ENCODE measurements at regions of chr4 and their contacts with region 1.

Region 1: GRCh38 chr4:134948110-134948642 is 746.6 kb upstream of the PABPC4L start:
- DNase-seq: no peak
- H3K4me3 ChIP-seq: no peak overlapping the region
- H3K27ac ChIP-seq: no peak overlapping the region
- H3K4me1 ChIP-seq: no peaks in the 10 kb centered on the region
- H3K27me3 ChIP-seq: no peaks in the 10 kb centered on the region
- CTCF ChIP-seq: no peak
- POLR2A ChIP-seq: no peak

Region 2: DNA sequence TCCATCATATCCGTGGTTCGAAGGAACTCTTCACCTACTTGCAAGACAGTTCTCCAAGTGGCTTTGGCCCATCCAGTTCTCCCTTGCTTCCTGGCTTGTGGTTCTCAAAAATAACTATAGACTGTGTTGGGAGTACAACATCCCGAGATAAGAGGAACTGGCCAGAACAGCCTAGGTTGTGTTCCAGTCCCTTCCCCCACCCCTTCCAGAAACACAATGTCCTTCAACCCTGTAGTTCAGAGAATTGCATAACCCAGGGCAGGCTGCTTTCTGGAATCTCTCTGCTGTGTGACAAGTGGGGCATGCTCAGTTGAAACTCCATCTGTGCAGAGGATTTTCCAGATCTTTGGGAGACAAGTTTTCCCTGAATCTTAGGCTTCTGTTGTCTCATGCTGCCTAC is 1592.5 kb before region 1 on chr4:
- intact Hi-C with region 1: no loop called
- DNase-seq: no peak
- H3K4me3 ChIP-seq: no peak overlapping the region
- H3K27ac ChIP-seq: no peak overlapping the region
- H3K4me1 ChIP-seq: no peaks in the 10 kb centered on the region
- H3K27me3 ChIP-seq: no peaks in the 10 kb centered on the region
- CTCF ChIP-seq: no peak
- POLR2A ChIP-seq: no peak

Region 3: GRCh38 chr4:134883831-134884449 is 64.2 kb before region 1 on chr4:
- intact Hi-C with region 1: no loop called
- DNase-seq: no peak
- H3K4me3 ChIP-seq: no peak overlapping the region
- H3K27ac ChIP-seq: no peak overlapping the region
- H3K4me1 ChIP-seq: no peaks in the 10 kb centered on the region
- H3K27me3 ChIP-seq: no peaks in the 10 kb centered on the region
- CTCF ChIP-seq: no peak
- POLR2A ChIP-seq: no peak

Region 4: DNA sequence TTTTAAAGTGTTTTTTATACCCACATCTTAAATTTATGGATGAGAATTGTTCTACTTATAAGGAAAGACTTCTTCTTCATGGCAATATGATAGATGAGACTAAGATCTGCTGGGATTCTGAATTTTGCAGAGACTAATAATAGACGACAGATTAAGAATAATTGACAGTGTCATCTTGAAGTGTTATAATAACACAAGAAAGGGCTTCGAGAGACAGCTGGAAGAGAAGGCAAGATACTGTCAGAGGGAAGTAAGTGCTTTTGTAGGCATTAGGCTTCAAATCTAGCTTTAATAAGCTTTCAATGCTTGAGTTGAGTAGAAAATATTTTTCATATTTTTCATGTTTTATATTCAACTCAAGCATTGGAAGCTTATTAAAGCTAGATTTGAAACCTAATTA is 51.0 kb after region 1 on chr4:
- intact Hi-C with region 1: loop called (anchors 2 kb)
- DNase-seq: no peak
- H3K4me3 ChIP-seq: no peak overlapping the region
- H3K27ac ChIP-seq: no peak overlapping the region
- H3K4me1 ChIP-seq: no peaks in the 10 kb centered on the region
- H3K27me3 ChIP-seq: no peaks in the 10 kb centered on the region
- CTCF ChIP-seq: no peak
- POLR2A ChIP-seq: no peak

Region 5: GRCh38 chr4:135116651-135117050 is 168.5 kb after region 1 on chr4:
- intact Hi-C with region 1: no loop called
- DNase-seq: no peak
- H3K4me3 ChIP-seq: no peak overlapping the region
- H3K27ac ChIP-seq: no peak overlapping the region
- H3K4me1 ChIP-seq: no peaks in the 10 kb centered on the region
- H3K27me3 ChIP-seq: no peaks in the 10 kb centered on the region
- CTCF ChIP-seq: no peak
- POLR2A ChIP-seq: no peak

Region 6: GRCh38 chr4:135605076-135605475 is 656.9 kb after region 1 on chr4:
- intact Hi-C with region 1: loop called (anchors 5 kb)
- DNase-seq: no peak
- H3K4me3 ChIP-seq: no peak overlapping the region
- H3K27ac ChIP-seq: no peak overlapping the region
- H3K4me1 ChIP-seq: no peaks in the 10 kb centered on the region
- H3K27me3 ChIP-seq: no peaks in the 10 kb centered on the region
- CTCF ChIP-seq: no peak
- POLR2A ChIP-seq: no peak